ENCODE measurements at regions of chr10 and their contacts with region 1.

Region 1: GRCh38 chr10:108469940-108470339 is 1305.4 kb upstream of the SORCS1 start:
- DNase-seq: no peak
- H3K4me3 Mint-ChIP-seq: no peak overlapping the region
- H3K27ac Mint-ChIP-seq: no peak overlapping the region
- H3K4me1 Mint-ChIP-seq: no peaks in the 10 kb centered on the region
- H3K27me3 Mint-ChIP-seq: no peaks in the 10 kb centered on the region
- CTCF ChIP-seq: no peak

Region 2: GRCh38 chr10:108375691-108376090 is 94.2 kb before region 1 on chr10:
- CTCF ChIA-PET with region 1: no interaction called
- POLR2A ChIA-PET with region 1: no interaction called
- intact Hi-C with region 1: no loop called
- DNase-seq: peak; percentile 16
- H3K4me3 Mint-ChIP-seq: no peak overlapping the region
- H3K27ac Mint-ChIP-seq: no peak overlapping the region
- H3K4me1 Mint-ChIP-seq: peaks cover 8% of the 10 kb centered on the region
- H3K27me3 Mint-ChIP-seq: no peaks in the 10 kb centered on the region
- CTCF ChIP-seq: no peak

Region 3: DNA sequence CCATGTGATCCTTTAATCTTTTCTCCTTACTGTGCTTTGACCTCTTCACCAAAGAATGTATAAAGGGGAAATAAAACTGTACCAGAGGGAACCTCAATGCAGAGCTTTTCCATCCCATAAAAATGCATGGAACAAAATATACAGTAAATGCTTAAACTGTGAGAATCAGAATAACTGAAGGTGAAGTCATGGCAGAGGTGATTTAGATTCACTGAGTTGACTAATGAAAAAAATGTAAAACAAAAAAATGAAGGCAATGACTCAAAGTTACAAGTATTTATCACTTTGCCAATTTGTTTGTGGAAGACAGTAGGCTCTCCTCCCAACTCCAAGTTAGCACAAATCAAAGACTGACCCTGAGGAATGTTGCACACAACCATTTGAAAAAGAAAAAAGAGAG is 26.2 kb after region 1 on chr10:
- CTCF ChIA-PET with region 1: no interaction called
- POLR2A ChIA-PET with region 1: no interaction called
- intact Hi-C with region 1: loop called (anchors 1 kb)
- DNase-seq: no peak
- H3K4me3 Mint-ChIP-seq: no peak overlapping the region
- H3K27ac Mint-ChIP-seq: no peak overlapping the region
- H3K4me1 Mint-ChIP-seq: no peaks in the 10 kb centered on the region
- H3K27me3 Mint-ChIP-seq: no peaks in the 10 kb centered on the region
- CTCF ChIP-seq: no peak

Measured in MCF 10A (cell line).